ENCODE measurements at regions of chr2 and their contacts with region 1.

Region 1: GRCh38 chr2:157327621-157328500 is 2.2 kb upstream of the ERMN start:
- DNase-seq: peak; percentile 68
- ATAC-seq: peak; percentile 99
- H3K4me3 ChIP-seq: no peak overlapping the region
- H3K27ac ChIP-seq: no peak overlapping the region
- H3K4me1 ChIP-seq: no peaks in the 10 kb centered on the region
- H3K27me3 ChIP-seq: no peaks in the 10 kb centered on the region
- CTCF ChIP-seq: peak; percentile 88 to 97 (median 96)
- EP300 ChIP-seq: no peak
- POLR2A ChIP-seq: no peak
- RAD21 ChIP-seq: peak; percentile 88

Region 2: GRCh38 chr2:157229572-157229971 is 98.3 kb before region 1 on chr2:
- CTCF ChIA-PET with region 1: no interaction called
- POLR2A ChIA-PET with region 1: no interaction called
- RAD21 ChIA-PET with region 1: no interaction called
- SMC1A ChIA-PET with region 1: no interaction called
- in situ Hi-C with region 1: no loop called
- intact Hi-C with region 1: no loop called
- DNase-seq: no peak
- ATAC-seq: no peak
- H3K4me3 ChIP-seq: no peak overlapping the region
- H3K27ac ChIP-seq: no peak overlapping the region
- H3K4me1 ChIP-seq: no peaks in the 10 kb centered on the region
- H3K27me3 ChIP-seq: no peaks in the 10 kb centered on the region
- CTCF ChIP-seq: no peak
- EP300 ChIP-seq: no peak
- POLR2A ChIP-seq: no peak
- RAD21 ChIP-seq: no peak

Region 3: DNA sequence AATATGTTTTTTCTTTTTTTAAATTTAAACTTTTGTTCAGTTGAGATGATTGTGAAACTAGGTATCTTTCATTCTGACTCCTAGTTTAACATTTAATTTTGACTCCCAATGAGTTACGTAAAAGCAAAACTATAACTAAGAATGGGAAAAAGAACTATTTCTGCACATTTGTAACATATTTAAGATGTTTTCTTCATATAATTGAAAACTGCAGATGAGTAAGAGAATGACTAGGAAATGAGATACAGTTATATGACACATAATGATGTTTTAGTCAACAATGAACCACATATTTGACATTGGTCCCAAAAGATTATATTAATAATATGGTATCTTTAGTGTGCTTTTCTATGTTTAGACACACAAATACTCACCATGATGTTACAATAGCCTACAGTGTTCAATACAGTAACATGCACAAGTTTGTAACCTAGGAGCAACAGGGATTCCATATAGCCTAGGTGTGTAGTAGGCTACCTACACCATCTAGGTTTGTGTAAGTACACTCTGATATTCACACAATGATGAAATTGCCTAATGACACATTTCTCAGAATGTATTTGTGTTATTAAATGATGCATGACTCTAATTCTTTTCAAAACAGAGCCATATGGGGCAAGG is 14.9 kb before region 1 on chr2:
- CTCF ChIA-PET with region 1: interaction called, 226 read pairs
- POLR2A ChIA-PET with region 1: no interaction called
- RAD21 ChIA-PET with region 1: interaction called, 126 read pairs
- SMC1A ChIA-PET with region 1: interaction called, 10 read pairs
- in situ Hi-C with region 1: no loop called
- intact Hi-C with region 1: no loop called
- DNase-seq: no peak
- ATAC-seq: peak; percentile 68
- H3K4me3 ChIP-seq: no peak overlapping the region
- H3K27ac ChIP-seq: no peak overlapping the region
- H3K4me1 ChIP-seq: no peaks in the 10 kb centered on the region
- H3K27me3 ChIP-seq: no peaks in the 10 kb centered on the region
- CTCF ChIP-seq: no peak
- EP300 ChIP-seq: no peak
- POLR2A ChIP-seq: no peak
- RAD21 ChIP-seq: no peak

Region 4: GRCh38 chr2:157404363-157404762 is 76.5 kb after region 1 on chr2:
- CTCF ChIA-PET with region 1: interaction called, 13 read pairs
- POLR2A ChIA-PET with region 1: no interaction called
- RAD21 ChIA-PET with region 1: interaction called, 12 read pairs
- SMC1A ChIA-PET with region 1: interaction called, 11 read pairs
- in situ Hi-C with region 1: no loop called
- intact Hi-C with region 1: loop called (anchors 2 kb)
- DNase-seq: peak; percentile 85
- ATAC-seq: peak; percentile 99
- H3K4me3 ChIP-seq: no peak overlapping the region
- H3K27ac ChIP-seq: no peak overlapping the region; the same call in 1 of the 2 replicates
- H3K4me1 ChIP-seq: peaks cover 7% of the 10 kb centered on the region
- H3K27me3 ChIP-seq: no peaks in the 10 kb centered on the region
- CTCF ChIP-seq: no peak
- EP300 ChIP-seq: peak; percentile 87 to 92
- POLR2A ChIP-seq: no peak
- RAD21 ChIP-seq: 0 out of 2 replicates have a peak, but pooled peaks have one; percentile 17

Region 5: DNA sequence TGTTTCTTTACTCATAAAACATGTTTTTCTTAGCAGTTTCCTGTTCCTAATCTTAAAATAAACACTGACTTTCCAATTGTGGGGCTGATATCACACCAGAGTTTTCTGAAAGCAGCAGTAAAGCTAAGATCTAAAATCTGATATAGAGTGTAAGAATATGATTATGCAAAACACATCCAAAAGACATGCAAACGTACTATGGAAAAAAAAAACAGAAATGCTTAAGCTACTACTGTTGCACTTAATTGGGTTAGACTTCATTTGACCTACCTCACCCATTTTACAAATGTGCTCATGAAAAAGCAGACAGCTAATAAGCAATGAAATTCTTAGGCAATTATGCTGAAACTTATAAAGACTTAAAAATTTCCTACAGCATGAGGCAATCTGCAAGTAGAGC is 105.5 kb after region 1 on chr2:
- CTCF ChIA-PET with region 1: interaction called, 208 read pairs
- POLR2A ChIA-PET with region 1: interaction called, 4 read pairs
- RAD21 ChIA-PET with region 1: interaction called, 51 read pairs
- SMC1A ChIA-PET with region 1: interaction called, 51 read pairs
- in situ Hi-C with region 1: no loop called
- intact Hi-C with region 1: no loop called
- DNase-seq: no peak
- ATAC-seq: no peak
- H3K4me3 ChIP-seq: peak overlapping the region; percentile 35; the same call in 1 of the 2 replicates
- H3K27ac ChIP-seq: no peak overlapping the region
- H3K4me1 ChIP-seq: peaks cover 10% of the 10 kb centered on the region
- H3K27me3 ChIP-seq: no peaks in the 10 kb centered on the region
- CTCF ChIP-seq: no peak
- EP300 ChIP-seq: no peak
- POLR2A ChIP-seq: no peak
- RAD21 ChIP-seq: no peak

Region 6: GRCh38 chr2:157468931-157469708 is 141.3 kb after region 1 on chr2:
- CTCF ChIA-PET with region 1: interaction called, 41 read pairs
- POLR2A ChIA-PET with region 1: interaction called, 3 read pairs
- RAD21 ChIA-PET with region 1: interaction called, 7 read pairs
- SMC1A ChIA-PET with region 1: interaction called, 30 read pairs
- in situ Hi-C with region 1: no loop called
- intact Hi-C with region 1: loop called (anchors 5 kb)
- DNase-seq: peak; percentile 95
- ATAC-seq: peak; percentile 78
- H3K4me3 ChIP-seq: peak overlapping the region; percentile 46; the same call in 1 of the 2 replicates
- H3K27ac ChIP-seq: peak overlapping the region; percentile 98
- H3K4me1 ChIP-seq: peaks cover 38% of the 10 kb centered on the region
- H3K27me3 ChIP-seq: no peaks in the 10 kb centered on the region
- CTCF ChIP-seq: no peak
- EP300 ChIP-seq: peak; percentile 100
- POLR2A ChIP-seq: no peak
- RAD21 ChIP-seq: peak; percentile 22; the same call in 1 of the 2 replicates

Region 7: DNA sequence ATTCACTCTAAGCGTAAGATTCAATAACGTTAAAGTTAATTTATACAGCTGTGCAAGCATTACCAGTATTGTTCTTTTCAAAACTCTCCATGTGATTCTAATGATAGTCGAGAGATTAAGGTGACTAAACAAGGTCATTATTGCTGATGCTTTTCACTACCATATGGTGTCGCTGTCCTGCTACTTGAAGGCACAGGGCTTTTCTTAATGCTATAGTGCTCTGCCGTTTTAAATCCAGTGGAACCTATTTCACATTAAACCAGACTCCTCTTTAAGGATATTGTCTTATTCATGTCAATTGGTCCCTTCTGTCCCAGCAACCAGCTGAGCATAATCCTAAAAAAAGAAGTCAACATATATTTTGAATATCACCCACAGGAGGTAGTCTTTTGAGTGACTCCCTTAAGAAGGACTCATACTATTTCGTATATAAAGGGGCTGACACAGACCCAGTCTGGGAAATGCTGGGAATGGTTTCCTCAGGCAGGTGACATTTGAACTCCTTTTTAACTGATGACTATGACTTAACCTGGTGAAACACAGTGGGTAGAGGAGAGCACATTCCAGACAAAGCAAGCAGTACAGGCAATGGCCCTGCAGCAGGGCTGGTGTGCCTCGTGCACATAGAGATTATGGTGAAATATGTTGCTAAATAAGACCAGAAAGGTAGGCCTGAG is 169.9 kb after region 1 on chr2:
- CTCF ChIA-PET with region 1: interaction called, 165 read pairs
- POLR2A ChIA-PET with region 1: no interaction called
- RAD21 ChIA-PET with region 1: interaction called, 44 read pairs
- SMC1A ChIA-PET with region 1: interaction called, 165 read pairs
- in situ Hi-C with region 1: loop called (anchors 5 kb)
- intact Hi-C with region 1: no loop called
- DNase-seq: no peak
- ATAC-seq: peak; percentile 97
- H3K4me3 ChIP-seq: no peak overlapping the region
- H3K27ac ChIP-seq: no peak overlapping the region
- H3K4me1 ChIP-seq: no peaks in the 10 kb centered on the region
- H3K27me3 ChIP-seq: no peaks in the 10 kb centered on the region
- CTCF ChIP-seq: peak; percentile 72 to 87 (median 82)
- EP300 ChIP-seq: no peak
- POLR2A ChIP-seq: no peak
- RAD21 ChIP-seq: peak; percentile 86

Region 8: DNA sequence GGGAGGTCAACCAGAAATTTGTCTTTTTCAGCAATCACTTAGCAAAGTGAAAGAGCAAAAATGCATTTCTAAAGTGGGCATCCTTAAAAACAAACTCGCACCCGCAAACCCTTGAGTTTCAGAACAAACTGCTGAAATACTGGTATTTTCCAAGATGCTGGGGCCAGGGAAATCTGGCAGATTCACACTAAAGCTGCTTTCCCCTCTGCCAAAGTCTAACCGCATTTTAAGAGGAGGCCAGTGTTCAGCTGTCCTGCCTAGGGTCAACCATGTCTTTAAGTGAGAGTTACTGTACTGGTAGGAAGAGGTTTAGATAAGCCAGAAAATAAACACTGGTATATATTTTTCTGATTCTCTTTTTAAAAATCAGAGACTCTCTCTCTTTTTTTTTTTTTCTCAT is 492.3 kb after region 1 on chr2:
- CTCF ChIA-PET with region 1: no interaction called
- POLR2A ChIA-PET with region 1: no interaction called
- RAD21 ChIA-PET with region 1: no interaction called
- SMC1A ChIA-PET with region 1: no interaction called
- in situ Hi-C with region 1: no loop called
- intact Hi-C with region 1: no loop called
- DNase-seq: no peak
- ATAC-seq: no peak
- H3K4me3 ChIP-seq: no peak overlapping the region
- H3K27ac ChIP-seq: no peak overlapping the region
- H3K4me1 ChIP-seq: no peaks in the 10 kb centered on the region
- H3K27me3 ChIP-seq: no peaks in the 10 kb centered on the region
- CTCF ChIP-seq: no peak
- EP300 ChIP-seq: no peak
- POLR2A ChIP-seq: no peak
- RAD21 ChIP-seq: no peak